ENCODE measurements at regions of chr2 and their contacts with region 1.

Region 1: DNA sequence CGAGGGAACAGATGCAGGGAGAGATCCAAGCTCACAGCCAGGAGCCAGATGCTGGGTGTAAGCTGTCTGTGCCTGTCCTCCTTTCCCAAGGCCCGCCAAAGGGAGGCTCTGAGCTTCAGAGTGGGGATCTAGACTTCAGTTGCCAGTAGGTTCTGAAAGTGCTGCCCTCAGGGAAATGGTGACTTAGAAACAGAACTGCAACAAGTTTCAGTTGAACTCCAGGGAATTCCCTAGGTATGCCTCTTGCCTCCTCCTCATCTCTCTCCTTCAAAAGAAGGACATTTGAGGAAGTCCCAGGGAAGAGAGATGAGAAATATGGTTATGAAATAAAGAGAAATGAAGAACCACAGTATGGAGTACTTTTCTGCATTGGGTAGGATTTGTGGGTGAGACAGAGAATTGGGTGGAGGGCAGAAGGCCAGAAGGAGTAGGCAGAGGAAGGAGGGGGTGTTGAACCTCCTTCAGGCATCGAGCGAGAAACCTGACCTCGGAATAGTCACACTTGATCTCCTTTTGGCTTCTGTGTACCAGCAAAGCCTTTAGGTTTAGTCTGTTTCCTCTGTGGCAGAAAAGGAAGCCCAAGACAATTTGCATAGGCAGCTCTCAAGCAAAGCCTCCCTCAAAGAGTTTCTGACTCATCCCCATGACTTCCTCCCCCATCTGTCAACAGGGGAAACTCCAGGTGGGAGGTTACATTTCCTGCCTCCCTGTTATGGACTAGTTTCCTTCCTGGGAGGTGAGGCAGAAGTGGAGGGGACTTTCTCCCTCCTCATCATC is 45.7 kb downstream of the QPCT start:
- DNase-seq: peak; percentile 93
- H3K4me3 ChIP-seq: peak overlapping the region; percentile 48
- H3K27ac ChIP-seq: peak overlapping the region; percentile 80
- H3K4me1 ChIP-seq: peaks cover 75% of the 10 kb centered on the region
- CTCF ChIP-seq: no peak

Region 2: GRCh38 chr2:37324786-37325624 is 65.2 kb before region 1 on chr2 and contains the start of gene PRKD3:
- CTCF ChIA-PET with region 1: no interaction called
- POLR2A ChIA-PET with region 1: interaction called, 14 read pairs
- intact Hi-C with region 1: no loop called
- DNase-seq: no peak
- H3K4me3 ChIP-seq: peak within 1 kb of the TSS; percentile 98
- H3K27ac ChIP-seq: peak within 1 kb of the TSS; percentile 81
- H3K4me1 ChIP-seq: peaks cover 40% of the 10 kb centered on the region
- CTCF ChIP-seq: no peak
- total RNA-seq, gene PRKD3: 63.2 and 74.3 TPM in 2 replicates

Region 3: GRCh38 chr2:37376421-37377186 is 13.6 kb before region 1 on chr2:
- CTCF ChIA-PET with region 1: interaction called, 37 read pairs
- POLR2A ChIA-PET with region 1: interaction called, 158 read pairs
- intact Hi-C with region 1: loop called (anchors 1 kb)
- DNase-seq: peak; percentile 95
- H3K4me3 ChIP-seq: peak overlapping the region; percentile 58
- H3K27ac ChIP-seq: peak overlapping the region; percentile 98
- H3K4me1 ChIP-seq: peaks cover 94% of the 10 kb centered on the region
- CTCF ChIP-seq: no peak

Region 4: GRCh38 chr2:37653805-37654378 is 263.7 kb after region 1 on chr2:
- CTCF ChIA-PET with region 1: interaction called, 4 read pairs
- POLR2A ChIA-PET with region 1: no interaction called
- intact Hi-C with region 1: loop called (anchors 5 kb)
- DNase-seq: peak; percentile 82
- H3K4me3 ChIP-seq: peak overlapping the region; percentile 64
- H3K27ac ChIP-seq: peak overlapping the region; percentile 94
- H3K4me1 ChIP-seq: peaks cover 85% of the 10 kb centered on the region
- CTCF ChIP-seq: no peak

Region 5: DNA sequence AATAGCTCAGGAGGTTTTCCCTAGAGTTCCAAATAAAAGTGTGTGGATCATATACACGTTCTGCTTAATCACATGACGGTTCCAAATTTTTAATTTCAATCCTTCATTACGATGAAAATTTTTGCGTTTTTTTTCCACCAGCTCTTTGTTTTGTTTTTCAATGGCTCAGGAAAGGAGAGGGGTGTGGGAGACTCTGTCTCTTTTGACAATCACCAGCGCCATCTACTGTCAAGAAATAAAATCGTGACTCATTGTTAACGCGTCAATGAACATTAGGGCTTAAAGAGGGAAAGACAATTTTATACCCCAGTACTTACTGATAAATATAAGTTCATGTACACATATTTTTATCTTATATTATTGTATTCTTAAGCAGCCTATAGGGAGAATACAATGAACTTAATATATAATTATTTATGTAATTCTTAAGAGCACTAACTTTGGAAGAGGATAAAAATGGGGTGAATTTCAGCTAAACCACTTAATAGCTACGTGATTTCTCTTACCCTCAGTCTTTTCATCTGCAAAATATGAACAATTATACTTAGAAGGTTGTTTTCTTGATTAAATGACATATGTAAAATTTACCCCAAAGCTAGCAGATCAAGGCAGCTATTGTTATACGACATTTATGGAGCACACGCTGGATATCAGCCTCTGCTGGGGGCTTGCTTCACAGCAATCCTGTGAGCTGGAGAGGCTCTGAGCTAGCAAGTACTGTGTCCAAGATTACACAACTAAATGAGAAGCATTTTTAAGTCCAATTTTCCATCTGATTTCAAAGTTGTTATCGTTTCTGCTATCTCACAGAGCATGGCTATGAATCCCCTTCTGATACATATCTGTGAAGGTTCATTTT is 487.5 kb after region 1 on chr2:
- CTCF ChIA-PET with region 1: interaction called, 12 read pairs
- POLR2A ChIA-PET with region 1: no interaction called
- intact Hi-C with region 1: no loop called
- DNase-seq: peak; percentile 72
- H3K4me3 ChIP-seq: no peak overlapping the region
- H3K27ac ChIP-seq: no peak overlapping the region
- H3K4me1 ChIP-seq: no peaks in the 10 kb centered on the region
- CTCF ChIP-seq: peak; percentile 96

Measured in OCI-LY7 (cell line).